H1 (cell line): ENCODE measurements at regions of chr1 and their contacts with region 1.

Region 1: DNA sequence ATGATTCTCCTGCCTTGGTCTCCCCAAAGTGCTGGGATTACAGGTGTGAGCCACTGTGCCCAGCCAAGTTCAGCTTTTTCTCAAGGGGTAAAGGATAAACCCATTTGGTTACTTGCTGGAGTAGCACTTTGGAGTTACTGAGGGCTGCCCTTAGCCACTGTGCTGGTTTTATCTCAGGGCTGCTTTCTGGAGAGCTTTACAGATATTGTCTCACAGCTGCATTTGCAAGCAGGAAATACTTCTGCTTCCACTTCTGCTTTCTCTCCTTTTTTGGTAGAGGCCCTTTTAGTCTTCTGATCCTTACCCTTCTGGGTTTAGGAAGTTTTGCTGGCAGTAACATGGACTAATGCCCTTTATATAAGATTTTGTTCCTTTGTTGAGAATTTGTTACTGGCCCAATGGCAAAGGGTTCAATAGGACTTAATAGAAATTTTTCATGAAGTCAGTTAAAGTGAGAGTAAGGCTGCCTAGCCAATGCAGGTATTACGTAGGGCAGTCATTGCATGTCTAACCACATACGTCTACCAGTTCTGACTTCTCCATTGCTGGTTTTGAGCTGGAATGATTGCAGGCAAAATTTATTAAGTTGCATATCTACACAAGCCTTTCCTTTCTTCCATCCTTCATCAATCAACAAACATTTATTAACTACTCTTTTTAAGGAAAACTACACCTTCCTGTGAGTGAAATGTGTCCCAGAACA is 24.4 kb downstream of the CAP1 start:
- DNase-seq: no peak
- H3K4me3 ChIP-seq: no peak overlapping the region
- H3K27ac ChIP-seq: no peak overlapping the region
- H3K4me1 ChIP-seq: peaks cover 0 to 2% (median 0%) of the 10 kb centered on the region in 4 experiments; a peak in 1 of 7 replicates
- H3K27me3 ChIP-seq: no peaks in the 10 kb centered on the region
- CTCF ChIP-seq: no peak
- EP300 ChIP-seq: no peak
- POLR2A ChIP-seq: no peak
- RAD21 ChIP-seq: no peak

Region 2: DNA sequence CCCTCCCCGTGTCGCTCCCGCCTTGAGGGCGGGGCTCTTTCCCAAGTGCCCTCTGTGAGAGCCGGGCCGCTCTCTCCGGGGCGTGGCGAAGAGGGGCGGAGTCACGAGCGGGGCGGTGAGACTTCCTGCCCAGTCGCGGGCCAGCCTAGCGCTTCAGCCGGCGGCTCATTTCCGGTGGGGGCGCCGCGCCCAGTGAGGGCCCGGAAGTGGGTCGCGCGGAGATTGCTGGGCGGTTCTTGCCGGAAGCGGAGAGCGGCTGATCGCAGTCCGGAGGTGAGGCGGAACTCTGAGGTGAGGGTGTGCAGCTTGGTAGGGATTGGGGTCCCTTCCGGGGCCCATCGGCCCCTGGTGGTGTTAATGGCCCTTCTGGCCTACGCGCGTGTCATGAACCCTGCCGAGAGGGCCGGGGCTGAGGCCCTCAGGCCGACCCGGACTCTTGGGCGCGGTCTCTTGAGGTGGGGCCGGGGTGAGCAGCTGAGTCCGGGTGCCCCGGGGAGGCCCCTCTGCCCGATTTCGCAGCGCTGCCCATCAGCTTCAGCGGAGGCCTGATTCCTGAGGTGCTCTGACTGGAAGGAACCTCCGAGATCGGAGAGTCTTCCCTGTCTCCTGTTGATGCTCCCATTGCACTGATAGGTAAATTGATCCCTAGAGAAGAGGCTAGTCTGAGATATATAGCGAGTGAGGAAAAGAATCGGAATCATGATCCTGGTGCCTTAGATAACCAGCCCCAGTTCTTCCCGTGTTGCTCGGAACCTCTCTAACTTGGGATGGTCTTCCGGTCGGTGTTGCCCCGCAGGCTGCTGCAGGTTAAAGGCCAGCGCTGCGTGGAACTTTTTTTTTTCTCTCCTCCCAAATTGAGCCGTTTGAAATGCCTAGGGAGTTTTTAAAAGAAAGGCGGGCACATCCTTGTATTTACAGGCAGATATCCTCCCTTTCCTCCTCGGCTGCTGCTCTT is 24.2 kb before region 1 on chr1 and contains the start of gene CAP1:
- CTCF ChIA-PET with region 1: interaction called, 4 read pairs
- POLR2A ChIA-PET with region 1: interaction called, 10 read pairs
- DNase-seq: peak; percentile 97 to 99
- H3K4me3 ChIP-seq: peak within 1 kb of the TSS; percentile 79 to 99 (median 93)
- H3K27ac ChIP-seq: peak within 1 kb of the TSS; percentile 96
- H3K4me1 ChIP-seq: peaks cover 3 to 7% (median 3%) of the 10 kb centered on the region in 4 experiments; a peak in 4 of 7 replicates
- H3K27me3 ChIP-seq: no peaks in the 10 kb centered on the region
- CTCF ChIP-seq: no peak
- EP300 ChIP-seq: no peak
- POLR2A ChIP-seq: peak in 1 of 2 experiments; percentile 4; a peak in 1 of 3 replicates
- RAD21 ChIP-seq: no peak
- total RNA-seq, gene CAP1: 274 and 295 TPM in 2 replicates

Region 3: DNA sequence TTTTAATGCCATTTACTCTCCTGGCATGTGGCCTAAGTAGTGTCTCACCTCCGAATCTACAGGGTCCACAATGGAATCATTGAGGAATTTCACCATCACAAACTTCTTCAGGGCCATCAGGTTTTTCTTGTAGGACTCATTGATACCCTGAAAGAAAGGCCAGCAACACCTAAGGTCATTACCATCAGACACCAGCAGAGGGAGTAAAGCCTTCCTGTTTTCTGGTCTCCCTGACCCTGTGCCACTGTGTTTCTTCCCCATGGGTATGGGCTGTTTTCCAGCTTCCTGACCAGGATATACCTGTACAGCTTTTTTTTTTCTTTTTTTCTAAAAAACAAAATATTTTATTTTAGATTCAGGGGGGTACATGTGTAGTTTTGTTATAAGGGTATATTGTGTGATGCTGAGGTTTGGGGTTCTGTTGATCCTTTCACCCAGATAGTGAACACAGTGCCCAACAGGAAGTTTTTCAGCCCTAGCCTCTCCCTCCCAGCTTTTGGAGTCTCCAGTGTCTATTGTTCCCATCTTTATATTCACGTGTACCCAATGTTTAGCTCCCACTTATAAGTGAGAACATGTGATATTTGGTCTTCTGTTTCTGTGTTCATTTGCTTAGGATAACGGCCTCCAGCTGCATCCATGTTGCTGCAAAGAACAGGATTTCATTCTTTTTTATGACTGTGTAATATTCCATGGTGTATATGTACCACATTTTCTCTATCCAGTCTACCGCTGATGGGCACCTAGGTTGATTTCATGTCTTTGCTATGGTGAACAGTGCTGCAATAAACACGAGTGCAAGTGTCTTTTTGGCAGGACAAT is 13.8 kb after region 1 on chr1:
- CTCF ChIA-PET with region 1: interaction called, 20 read pairs
- POLR2A ChIA-PET with region 1: interaction called, 5 read pairs
- DNase-seq: peak in 1 of 2 experiments; percentile 79
- H3K4me3 ChIP-seq: no peak overlapping the region
- H3K27ac ChIP-seq: no peak overlapping the region
- H3K4me1 ChIP-seq: no peaks in the 10 kb centered on the region
- H3K27me3 ChIP-seq: no peaks in the 10 kb centered on the region
- CTCF ChIP-seq: peak; percentile 42 to 80 (median 66)
- EP300 ChIP-seq: no peak
- POLR2A ChIP-seq: no peak
- RAD21 ChIP-seq: peak; percentile 69 to 74

Region 4: GRCh38 chr1:40090652-40091355 is 25.9 kb after region 1 on chr1:
- CTCF ChIA-PET with region 1: no interaction called
- POLR2A ChIA-PET with region 1: no interaction called
- DNase-seq: no peak
- H3K4me3 ChIP-seq: no peak overlapping the region
- H3K27ac ChIP-seq: no peak overlapping the region
- H3K4me1 ChIP-seq: no peaks in the 10 kb centered on the region
- H3K27me3 ChIP-seq: no peaks in the 10 kb centered on the region
- CTCF ChIP-seq: no peak
- EP300 ChIP-seq: no peak
- POLR2A ChIP-seq: no peak
- RAD21 ChIP-seq: no peak